ENCODE measurements at regions of chr12 and their contacts with region 1.

Region 1: GRCh38 chr12:26564391-26564790 is 268.6 kb downstream of the ITPR2 start:
- DNase-seq: no peak
- ATAC-seq: no peak
- H3K4me3 Mint-ChIP-seq: no peak overlapping the region
- H3K27ac Mint-ChIP-seq: no peak overlapping the region
- H3K4me1 Mint-ChIP-seq: no peaks in the 10 kb centered on the region
- H3K27me3 Mint-ChIP-seq: no peaks in the 10 kb centered on the region
- CTCF ChIP-seq: no peak

Region 2: DNA sequence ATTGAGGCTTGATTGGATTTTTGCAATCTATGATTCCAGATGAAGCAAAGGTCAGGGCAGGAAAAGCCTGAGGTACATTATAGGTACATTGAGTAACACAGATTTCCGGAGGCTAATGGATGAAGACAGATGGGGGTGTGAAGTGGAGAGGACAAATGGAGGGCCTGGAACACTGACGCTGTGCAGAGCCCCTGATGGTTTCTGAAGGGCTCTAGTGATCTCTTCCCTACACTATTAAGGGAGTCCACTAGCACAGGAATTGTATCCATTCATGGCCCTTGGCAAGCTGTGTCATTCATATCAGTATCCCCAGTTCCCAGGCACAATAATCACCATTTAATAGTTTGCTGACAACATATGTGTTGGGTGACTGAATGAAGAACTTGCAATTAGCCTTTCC is 16.2 kb before region 1 on chr12:
- CTCF ChIA-PET with region 1: no interaction called
- POLR2A ChIA-PET with region 1: no interaction called
- intact Hi-C with region 1: loop called (anchors 2 kb)
- DNase-seq: no peak
- ATAC-seq: no peak
- H3K4me3 Mint-ChIP-seq: no peak overlapping the region
- H3K27ac Mint-ChIP-seq: no peak overlapping the region
- H3K4me1 Mint-ChIP-seq: no peaks in the 10 kb centered on the region
- H3K27me3 Mint-ChIP-seq: no peaks in the 10 kb centered on the region
- CTCF ChIP-seq: no peak